Ascending aorta (tissue), 2 donors: ENCODE measurements at regions of chr19 and their contacts with region 1.

Region 1: GRCh38 chr19:4638828-4639530 is at the start of gene TNFAIP8L1:
- DNase-seq: peak; percentile 89 to 97
- H3K4me3 ChIP-seq: peak within 1 kb of the TSS; percentile 71 to 76
- H3K27ac ChIP-seq: peak within 1 kb of the TSS in 1 of 2 donors; percentile 56
- H3K4me1 ChIP-seq: peaks cover 5 to 12% of the 10 kb centered on the region in 2 donors
- H3K27me3 ChIP-seq: no peaks in the 10 kb centered on the region
- CTCF ChIP-seq: no peak
- total RNA-seq, gene TNFAIP8L1: 0.64 TPM

Region 2: GRCh38 chr19:4557971-4558941 is 80.7 kb before region 1 on chr19:
- intact Hi-C with region 1: loop called (anchors 1 kb)
- DNase-seq: no peak
- H3K4me3 ChIP-seq: peak overlapping the region; percentile 6 to 45
- H3K27ac ChIP-seq: no peak overlapping the region
- H3K4me1 ChIP-seq: no peaks in the 10 kb centered on the region
- H3K27me3 ChIP-seq: no peaks in the 10 kb centered on the region
- CTCF ChIP-seq: peak; percentile 91 to 100 (median 100)

Region 3: GRCh38 chr19:4576016-4576933 is 62.7 kb before region 1 on chr19:
- intact Hi-C with region 1: loop called (anchors 5 kb)
- DNase-seq: no peak
- H3K4me3 ChIP-seq: no peak overlapping the region
- H3K27ac ChIP-seq: peak overlapping the region in 1 of 2 donors; percentile 11
- H3K4me1 ChIP-seq: no peaks in the 10 kb centered on the region
- H3K27me3 ChIP-seq: peaks cover 13% of the 10 kb centered on the region
- CTCF ChIP-seq: peak; percentile 36 to 67 (median 44)

Region 4: GRCh38 chr19:4669723-4670480 is 30.9 kb after region 1 on chr19 and contains the start of gene MYDGF:
- intact Hi-C with region 1: loop called (anchors 2 kb)
- DNase-seq: peak; percentile 50 to 94
- H3K4me3 ChIP-seq: peak within 1 kb of the TSS; percentile 86 to 94
- H3K27ac ChIP-seq: peak within 1 kb of the TSS; percentile 71 to 83
- H3K4me1 ChIP-seq: peaks cover 0 to 13% of the 10 kb centered on the region in 2 donors
- H3K27me3 ChIP-seq: no peaks in the 10 kb centered on the region
- CTCF ChIP-seq: no peak
- total RNA-seq, gene MYDGF: 49.0 TPM

Region 5: DNA sequence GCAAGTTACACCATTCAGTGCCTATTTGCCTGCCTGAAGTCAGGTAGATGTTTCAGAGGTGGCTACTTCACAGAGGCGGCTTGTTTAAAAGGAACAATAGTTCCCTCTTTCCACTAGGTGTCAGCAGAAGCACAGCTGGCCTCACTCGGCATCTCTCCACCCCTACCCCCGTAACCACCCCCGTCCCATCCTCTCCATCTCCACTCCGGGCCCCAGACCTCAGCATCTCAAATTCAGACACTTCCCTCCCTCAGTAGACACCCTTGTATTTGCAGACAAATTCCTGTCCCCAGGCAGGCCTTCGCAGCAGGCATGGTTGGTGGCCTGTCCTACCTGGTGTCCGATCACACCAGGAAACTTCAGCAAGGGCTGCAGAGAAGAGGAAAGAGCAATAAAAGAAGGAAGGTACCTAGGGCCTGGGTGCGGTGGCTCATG is 93.7 kb after region 1 on chr19:
- intact Hi-C with region 1: no loop called
- DNase-seq: no peak
- H3K4me3 ChIP-seq: no peak overlapping the region
- H3K27ac ChIP-seq: no peak overlapping the region
- H3K4me1 ChIP-seq: no peaks in the 10 kb centered on the region
- H3K27me3 ChIP-seq: no peaks in the 10 kb centered on the region
- CTCF ChIP-seq: peak; percentile 53 to 76 (median 56)

Region 6: GRCh38 chr19:5891938-5892771 is 1253.2 kb after region 1 on chr19:
- intact Hi-C with region 1: no loop called
- DNase-seq: no peak
- H3K4me3 ChIP-seq: no peak overlapping the region
- H3K27ac ChIP-seq: no peak overlapping the region
- H3K4me1 ChIP-seq: peaks cover 8 to 27% of the 10 kb centered on the region in 2 donors
- H3K27me3 ChIP-seq: no peaks in the 10 kb centered on the region
- CTCF ChIP-seq: peak in 2 of 3 experiments; percentile 42 to 51